ENCODE measurements at regions of chr5 and their contacts with region 1.

Region 1: GRCh38 chr5:131505237-131505908 is 129.7 kb downstream of the RAPGEF6 start:
- DNase-seq: no peak
- ATAC-seq: no peak
- H3K4me3 ChIP-seq: no peak overlapping the region
- H3K4me3 Mint-ChIP-seq: no peak overlapping the region
- H3K27ac ChIP-seq: no peak overlapping the region
- H3K27ac Mint-ChIP-seq: no peak overlapping the region
- H3K4me1 ChIP-seq: no peaks in the 10 kb centered on the region
- H3K4me1 Mint-ChIP-seq: peaks cover 32% of the 10 kb centered on the region
- H3K27me3 ChIP-seq: no peaks in the 10 kb centered on the region
- H3K27me3 Mint-ChIP-seq: no peaks in the 10 kb centered on the region
- CTCF ChIP-seq: no peak

Region 2: DNA sequence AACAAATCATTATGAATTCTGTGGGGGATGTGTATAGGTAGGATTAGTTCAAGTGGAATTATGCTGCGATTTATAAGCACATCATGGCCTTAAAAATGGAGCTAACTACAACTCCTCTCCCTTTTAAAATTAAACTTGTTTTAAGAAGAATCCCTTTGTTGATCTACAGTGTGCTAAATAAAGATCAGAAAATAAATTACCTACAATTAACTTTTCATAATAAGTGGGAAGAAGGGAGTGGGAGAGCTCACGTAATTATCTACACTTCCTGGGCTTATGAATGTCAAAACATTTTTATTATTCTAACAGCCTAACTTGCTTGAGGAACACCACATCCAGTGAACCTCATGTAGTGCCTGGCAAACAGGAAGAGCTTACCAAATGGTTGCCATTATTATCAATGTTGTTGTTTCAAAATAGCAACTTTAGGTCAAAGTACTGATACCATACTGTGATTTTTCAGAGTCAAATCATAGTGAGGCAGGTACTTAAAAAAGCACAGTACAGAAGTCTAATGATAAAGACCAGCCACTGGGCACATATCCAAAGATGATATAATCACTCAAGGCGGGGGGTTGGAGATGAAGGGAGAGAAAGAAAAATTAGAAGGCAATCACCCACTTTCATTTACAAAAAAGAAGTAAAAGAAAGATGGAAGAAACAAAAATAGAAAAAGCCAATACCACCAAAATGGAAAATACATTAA is 44.4 kb before region 1 on chr5:
- CTCF ChIA-PET with region 1: no interaction called
- POLR2A ChIA-PET with region 1: no interaction called
- intact Hi-C with region 1: loop called in 1 of 2 experiments (anchors 5 kb)
- DNase-seq: no peak
- ATAC-seq: no peak
- H3K4me3 ChIP-seq: no peak overlapping the region
- H3K4me3 Mint-ChIP-seq: no peak overlapping the region
- H3K27ac ChIP-seq: no peak overlapping the region
- H3K27ac Mint-ChIP-seq: peak overlapping the region; percentile 77
- H3K4me1 ChIP-seq: peaks cover 19% of the 10 kb centered on the region
- H3K4me1 Mint-ChIP-seq: peaks cover 53% of the 10 kb centered on the region
- H3K27me3 ChIP-seq: no peaks in the 10 kb centered on the region
- H3K27me3 Mint-ChIP-seq: no peaks in the 10 kb centered on the region
- CTCF ChIP-seq: no peak

Region 3: GRCh38 chr5:131521252-131521651 is 15.9 kb after region 1 on chr5:
- CTCF ChIA-PET with region 1: no interaction called
- POLR2A ChIA-PET with region 1: interaction called, 4 read pairs
- intact Hi-C with region 1: loop called in 1 of 2 experiments (anchors 2 kb)
- DNase-seq: no peak
- ATAC-seq: no peak
- H3K4me3 ChIP-seq: no peak overlapping the region
- H3K4me3 Mint-ChIP-seq: no peak overlapping the region
- H3K27ac ChIP-seq: no peak overlapping the region
- H3K27ac Mint-ChIP-seq: no peak overlapping the region
- H3K4me1 ChIP-seq: peaks cover 49% of the 10 kb centered on the region
- H3K4me1 Mint-ChIP-seq: peaks cover 68% of the 10 kb centered on the region
- H3K27me3 ChIP-seq: no peaks in the 10 kb centered on the region
- H3K27me3 Mint-ChIP-seq: no peaks in the 10 kb centered on the region
- CTCF ChIP-seq: no peak

Measured in CD8-positive, alpha-beta T cell (primary cell).